ENCODE measurements at regions of chr1 and their contacts with region 1.

Region 1: DNA sequence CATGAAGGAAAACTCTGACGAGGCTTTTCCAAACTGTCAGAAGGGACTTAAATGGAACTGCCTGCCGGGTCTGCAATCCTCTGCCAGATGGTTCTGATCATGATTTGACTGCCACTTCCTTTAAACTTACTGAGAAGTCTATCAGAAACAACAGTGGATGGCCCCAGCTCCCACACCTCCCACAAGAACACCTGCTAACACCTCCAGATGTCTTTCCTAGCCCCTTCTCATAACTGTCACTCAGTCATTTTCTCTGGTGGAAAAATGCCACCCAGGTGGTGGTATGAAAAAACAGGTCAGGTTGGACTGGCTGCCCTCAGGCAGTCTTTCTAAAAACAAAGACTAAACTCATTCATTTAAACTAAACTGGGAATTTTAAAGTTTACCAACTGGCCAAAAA is 66.7 kb upstream of the ABCD3 start:
- DNase-seq: no peak
- H3K4me3 ChIP-seq: no peak overlapping the region
- H3K27ac ChIP-seq: no peak overlapping the region
- H3K4me1 ChIP-seq: no peaks in the 10 kb centered on the region
- H3K27me3 ChIP-seq: no peaks in the 10 kb centered on the region
- CTCF ChIP-seq: no peak
- EP300 ChIP-seq: no peak
- POLR2A ChIP-seq: no peak

Region 2: GRCh38 chr1:94660994-94661393 is 309.5 kb after region 1 on chr1:
- intact Hi-C with region 1: loop called (anchors 10 kb)
- DNase-seq: no peak
- H3K4me3 ChIP-seq: no peak overlapping the region
- H3K27ac ChIP-seq: peak overlapping the region in 2 of 5 donors; percentile 25 to 46
- H3K4me1 ChIP-seq: peaks cover 3 to 30% (median 17%) of the 10 kb centered on the region in 4 donors
- H3K27me3 ChIP-seq: no peaks in the 10 kb centered on the region
- CTCF ChIP-seq: no peak
- EP300 ChIP-seq: no peak
- POLR2A ChIP-seq: no peak